ENCODE measurements at regions of chr1 and their contacts with region 1.

Region 1: GRCh38 chr1:50368179-50369012 is 54.8 kb downstream of the DMRTA2 start:
- DNase-seq: peak; percentile 59
- ATAC-seq: peak; percentile 61
- H3K4me3 Mint-ChIP-seq: no peak overlapping the region
- H3K27ac Mint-ChIP-seq: no peak overlapping the region
- H3K4me1 Mint-ChIP-seq: peaks cover 3% of the 10 kb centered on the region
- H3K27me3 Mint-ChIP-seq: peaks cover 35% of the 10 kb centered on the region

Region 2: GRCh38 chr1:50605186-50605875 is 236.9 kb after region 1 on chr1:
- CTCF ChIA-PET with region 1: no interaction called
- POLR2A ChIA-PET with region 1: no interaction called
- intact Hi-C with region 1: loop called (anchors 1 kb)
- DNase-seq: peak; percentile 16
- ATAC-seq: no peak
- H3K4me3 Mint-ChIP-seq: no peak overlapping the region
- H3K27ac Mint-ChIP-seq: no peak overlapping the region
- H3K4me1 Mint-ChIP-seq: no peaks in the 10 kb centered on the region
- H3K27me3 Mint-ChIP-seq: no peaks in the 10 kb centered on the region

Region 3: DNA sequence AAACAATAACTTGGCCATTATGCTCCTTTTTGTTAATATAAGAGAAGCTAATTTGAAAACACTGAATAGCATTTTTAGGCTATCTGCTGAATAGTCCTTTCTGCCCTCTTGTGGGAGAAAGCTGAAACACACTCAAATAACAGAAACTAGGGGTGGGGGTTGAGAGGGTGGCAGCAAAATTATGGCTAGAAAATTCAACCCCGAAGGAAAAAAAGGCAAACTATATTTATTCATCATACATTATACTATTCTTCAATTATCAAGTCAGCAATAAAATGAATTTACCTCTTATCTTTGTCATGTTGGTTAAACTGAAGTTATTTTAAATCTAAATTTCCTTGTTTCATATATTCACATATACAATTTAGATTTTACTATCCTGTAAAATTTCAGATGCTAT is 335.7 kb after region 1 on chr1:
- CTCF ChIA-PET with region 1: interaction called, 4 read pairs
- POLR2A ChIA-PET with region 1: interaction called, 3 read pairs
- intact Hi-C with region 1: loop called (anchors 1 to 2 kb)
- DNase-seq: no peak
- ATAC-seq: peak; percentile 36
- H3K4me3 Mint-ChIP-seq: no peak overlapping the region
- H3K27ac Mint-ChIP-seq: no peak overlapping the region
- H3K4me1 Mint-ChIP-seq: peaks cover 2% of the 10 kb centered on the region
- H3K27me3 Mint-ChIP-seq: no peaks in the 10 kb centered on the region

Region 4: GRCh38 chr1:50735443-50735842 is 367.0 kb after region 1 on chr1:
- CTCF ChIA-PET with region 1: no interaction called
- POLR2A ChIA-PET with region 1: no interaction called
- intact Hi-C with region 1: loop called in 1 of 2 experiments (anchors 1 kb)
- DNase-seq: no peak
- ATAC-seq: no peak
- H3K4me3 Mint-ChIP-seq: no peak overlapping the region
- H3K27ac Mint-ChIP-seq: no peak overlapping the region
- H3K4me1 Mint-ChIP-seq: peaks cover 2% of the 10 kb centered on the region
- H3K27me3 Mint-ChIP-seq: no peaks in the 10 kb centered on the region

Measured in activated CD4-positive, alpha-beta T cell treated with anti-CD3 and anti-CD28 coated beads for 36 hours (primary cell).